ENCODE measurements at regions of chr13 and their contacts with region 1.

Region 1: DNA sequence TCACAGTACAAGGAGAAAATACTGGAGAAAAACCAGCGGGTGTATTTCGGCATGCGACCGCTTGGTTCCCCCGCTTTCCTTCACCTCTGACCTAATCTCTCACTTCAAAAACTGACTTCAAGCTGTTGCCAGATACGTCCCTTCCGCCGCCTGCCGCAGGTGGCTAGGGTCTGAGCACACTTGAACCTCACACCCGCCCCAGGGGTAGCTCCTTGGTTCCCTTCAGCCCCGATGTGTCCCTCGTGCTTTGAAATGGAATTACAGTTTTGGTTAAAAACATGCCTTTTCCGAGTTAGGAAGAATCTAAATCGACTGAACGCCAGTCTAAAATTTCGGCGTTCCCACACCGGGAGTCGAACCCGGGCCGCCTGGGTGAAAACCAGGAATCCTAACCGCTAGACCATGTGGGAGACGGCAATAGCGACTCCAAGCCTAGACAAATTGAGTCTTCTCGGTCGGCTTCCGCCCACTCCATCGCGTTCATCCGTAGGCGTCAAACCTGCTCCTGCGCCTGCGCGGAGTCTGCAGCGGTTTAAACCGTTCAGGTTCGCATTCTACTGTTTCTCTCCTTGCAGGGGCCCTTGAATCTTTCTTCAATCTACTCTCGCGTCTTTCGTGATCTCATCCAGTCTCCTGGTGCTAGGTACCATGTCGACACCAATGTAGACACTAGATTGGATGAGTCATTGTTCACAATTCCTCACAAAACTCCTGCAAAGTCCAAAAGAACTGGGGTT is 71.5 kb downstream of the NUFIP1 start:
- DNase-seq: peak; percentile 95 to 98 (median 97)
- ATAC-seq: peak; percentile 85
- H3K4me3 ChIP-seq: peak overlapping the region; percentile 89
- H3K4me3 Mint-ChIP-seq: no peak overlapping the region
- H3K27ac ChIP-seq: peak overlapping the region; percentile 75
- H3K27ac Mint-ChIP-seq: no peak overlapping the region
- H3K4me1 ChIP-seq: peaks cover 5 to 9% of the 10 kb centered on the region in 2 donors
- H3K4me1 Mint-ChIP-seq: peaks cover 2 to 19% (median 7%) of the 10 kb centered on the region in 7 donors
- H3K27me3 ChIP-seq: no peaks in the 10 kb centered on the region
- H3K27me3 Mint-ChIP-seq: peaks cover 0 to 4% (median 0%) of the 10 kb centered on the region in 5 donors

Region 2: GRCh38 chr13:43905435-43906031 is 1012.2 kb before region 1 on chr13:
- CTCF ChIA-PET with region 1: no interaction called
- POLR2A ChIA-PET with region 1: no interaction called
- intact Hi-C with region 1: loop called in 1 of 2 experiments (anchors 5 kb)
- DNase-seq: peak in 7 of 9 donors; percentile 21 to 61 (median 48)
- ATAC-seq: peak; percentile 85
- H3K4me3 ChIP-seq: no peak overlapping the region
- H3K4me3 Mint-ChIP-seq: no peak overlapping the region
- H3K27ac ChIP-seq: no peak overlapping the region
- H3K27ac Mint-ChIP-seq: no peak overlapping the region
- H3K4me1 ChIP-seq: no peaks in the 10 kb centered on the region
- H3K4me1 Mint-ChIP-seq: peaks cover 0 to 6% (median 3%) of the 10 kb centered on the region in 7 donors
- H3K27me3 ChIP-seq: no peaks in the 10 kb centered on the region
- H3K27me3 Mint-ChIP-seq: peaks cover 13 to 35% (median 18%) of the 10 kb centered on the region in 5 donors

Region 3: DNA sequence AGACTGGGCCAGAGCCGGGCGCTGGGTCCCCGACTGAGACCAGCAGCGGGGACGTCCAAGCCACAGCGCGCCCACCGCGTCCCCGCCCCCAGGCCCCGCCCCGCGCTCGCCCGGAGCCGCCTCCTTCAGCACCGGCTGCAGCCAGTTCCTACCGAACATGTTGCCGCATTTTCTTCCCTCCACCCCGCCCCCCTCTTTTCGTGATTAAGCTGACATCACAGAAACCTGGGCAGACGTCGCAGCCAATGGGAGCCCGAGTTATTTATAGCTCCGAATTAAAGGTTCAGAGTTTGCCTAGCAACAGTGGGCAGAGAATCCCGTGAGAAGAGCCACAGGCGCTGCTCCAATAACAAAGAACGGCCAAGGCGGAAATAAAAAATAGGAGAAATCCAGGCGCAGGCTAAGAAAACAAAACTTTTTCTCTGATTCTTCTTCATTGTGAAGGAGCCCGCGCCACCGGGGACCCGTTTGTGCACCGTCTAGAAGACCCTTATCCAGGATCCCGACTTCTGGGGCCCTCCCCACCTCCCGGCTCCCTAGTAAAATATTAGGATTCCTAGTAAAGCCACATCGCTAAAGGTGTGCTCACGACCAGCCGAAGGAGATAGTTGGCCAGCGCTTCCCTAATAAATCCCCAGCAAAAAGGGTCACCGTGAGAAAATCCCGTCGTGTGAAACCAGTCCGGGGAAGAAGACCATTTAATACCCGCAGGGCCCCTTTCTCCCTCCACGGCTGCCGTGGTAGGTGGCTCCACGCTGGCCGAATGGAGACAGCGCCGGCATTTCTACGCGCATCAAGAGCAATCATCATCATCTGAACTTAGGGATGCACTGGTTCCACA is 482.4 kb before region 1 on chr13:
- CTCF ChIA-PET with region 1: interaction called, 3 read pairs
- POLR2A ChIA-PET with region 1: interaction called, 3 read pairs
- intact Hi-C with region 1: loop called in 1 of 2 experiments (anchors 1 kb)
- DNase-seq: peak; percentile 58 to 94 (median 78)
- ATAC-seq: peak; percentile 91
- H3K4me3 ChIP-seq: peak overlapping the region; percentile 65
- H3K4me3 Mint-ChIP-seq: peak overlapping the region; percentile 85 to 94 (median 90)
- H3K27ac ChIP-seq: peak overlapping the region; percentile 75
- H3K27ac Mint-ChIP-seq: peak overlapping the region; percentile 21 to 93 (median 83)
- H3K4me1 ChIP-seq: peaks cover 13 to 14% of the 10 kb centered on the region in 2 donors
- H3K4me1 Mint-ChIP-seq: peaks cover 14 to 34% (median 27%) of the 10 kb centered on the region in 7 donors
- H3K27me3 ChIP-seq: peaks cover 0 to 3% of the 10 kb centered on the region in 2 donors
- H3K27me3 Mint-ChIP-seq: peaks cover 6 to 73% (median 9%) of the 10 kb centered on the region in 5 donors

Region 4: DNA sequence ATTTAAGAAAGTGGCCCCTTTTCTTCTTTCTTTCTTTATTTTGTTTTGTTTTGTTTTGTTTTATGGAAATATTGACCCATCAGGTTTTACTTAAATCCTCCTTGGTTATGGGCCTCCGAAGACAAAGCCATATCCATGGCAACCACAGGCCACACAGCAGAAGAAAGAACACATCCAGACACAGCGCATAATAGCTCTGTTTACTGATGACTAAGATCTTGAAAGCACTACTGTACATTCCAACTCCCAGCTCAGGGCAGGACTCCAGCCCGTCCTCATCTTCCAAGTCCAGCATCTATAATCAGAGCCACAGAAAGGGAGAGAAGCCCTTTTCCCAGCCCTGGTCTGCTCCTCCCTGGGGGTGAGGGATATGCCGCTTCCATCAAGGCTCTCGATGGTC is 12.8 kb before region 1 on chr13:
- CTCF ChIA-PET with region 1: no interaction called
- POLR2A ChIA-PET with region 1: no interaction called
- intact Hi-C with region 1: no loop called
- DNase-seq: no peak
- ATAC-seq: no peak
- H3K4me3 ChIP-seq: no peak overlapping the region
- H3K4me3 Mint-ChIP-seq: no peak overlapping the region
- H3K27ac ChIP-seq: no peak overlapping the region
- H3K27ac Mint-ChIP-seq: no peak overlapping the region
- H3K4me1 ChIP-seq: no peaks in the 10 kb centered on the region
- H3K4me1 Mint-ChIP-seq: no peaks in the 10 kb centered on the region
- H3K27me3 ChIP-seq: no peaks in the 10 kb centered on the region
- H3K27me3 Mint-ChIP-seq: peaks cover 0 to 12% (median 5%) of the 10 kb centered on the region in 5 donors

Region 5: GRCh38 chr13:44969551-44970484 is 52.1 kb after region 1 on chr13:
- CTCF ChIA-PET with region 1: interaction called, 3 read pairs
- POLR2A ChIA-PET with region 1: no interaction called
- intact Hi-C with region 1: loop called (anchors 1 kb)
- DNase-seq: peak in 5 of 9 donors; percentile 13 to 27 (median 18)
- ATAC-seq: peak; percentile 51
- H3K4me3 ChIP-seq: no peak overlapping the region
- H3K4me3 Mint-ChIP-seq: no peak overlapping the region
- H3K27ac ChIP-seq: no peak overlapping the region
- H3K27ac Mint-ChIP-seq: no peak overlapping the region
- H3K4me1 ChIP-seq: no peaks in the 10 kb centered on the region
- H3K4me1 Mint-ChIP-seq: no peaks in the 10 kb centered on the region
- H3K27me3 ChIP-seq: no peaks in the 10 kb centered on the region
- H3K27me3 Mint-ChIP-seq: no peaks in the 10 kb centered on the region

Region 6: GRCh38 chr13:45340926-45341750 is 423.4 kb after region 1 on chr13 and contains the start of gene TPT1:
- CTCF ChIA-PET with region 1: no interaction called
- POLR2A ChIA-PET with region 1: no interaction called
- intact Hi-C with region 1: loop called in 1 of 2 experiments (anchors 1 kb)
- DNase-seq: peak; percentile 99 to 100 (median 99)
- ATAC-seq: peak; percentile 91
- H3K4me3 ChIP-seq: peak within 1 kb of the TSS; percentile 94
- H3K4me3 Mint-ChIP-seq: peak within 1 kb of the TSS; percentile 95 to 100 (median 98)
- H3K27ac ChIP-seq: peak within 1 kb of the TSS; percentile 99
- H3K27ac Mint-ChIP-seq: peak within 1 kb of the TSS; percentile 92 to 100 (median 99)
- H3K4me1 ChIP-seq: peaks cover 35 to 43% of the 10 kb centered on the region in 2 donors
- H3K4me1 Mint-ChIP-seq: peaks cover 35 to 70% (median 57%) of the 10 kb centered on the region in 7 donors
- H3K27me3 ChIP-seq: no peaks in the 10 kb centered on the region
- H3K27me3 Mint-ChIP-seq: no peaks in the 10 kb centered on the region
- total RNA-seq, gene TPT1: 4,230 to 13,134 (median 7,796) TPM

Region 7: DNA sequence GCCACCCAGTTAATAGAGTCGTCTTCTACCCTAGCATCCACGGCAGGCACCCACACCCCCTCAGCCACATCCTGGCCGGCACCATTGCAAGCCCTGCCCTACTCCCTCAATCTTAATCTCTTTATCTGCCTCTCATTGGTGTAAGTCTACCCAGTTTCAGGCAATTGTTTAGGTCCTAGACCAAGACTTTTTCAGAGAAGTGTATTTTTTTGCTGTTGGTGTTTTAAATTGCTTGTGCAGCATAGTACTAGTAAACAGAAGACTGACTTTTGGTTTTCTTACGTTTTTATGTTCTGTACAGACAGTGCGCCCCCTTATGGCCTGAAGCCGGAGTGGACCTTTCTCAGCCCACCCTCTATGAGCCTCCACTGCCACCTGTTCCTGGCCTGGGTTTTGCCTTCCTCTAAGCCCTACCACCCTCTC is 1266.5 kb after region 1 on chr13:
- CTCF ChIA-PET with region 1: no interaction called
- POLR2A ChIA-PET with region 1: no interaction called
- intact Hi-C with region 1: loop called in 1 of 2 experiments (anchors 5 kb)
- DNase-seq: peak in 8 of 9 donors; percentile 60 to 74 (median 69)
- ATAC-seq: peak; percentile 75
- H3K4me3 ChIP-seq: peak overlapping the region; percentile 83
- H3K4me3 Mint-ChIP-seq: peak overlapping the region; percentile 67 to 99 (median 85)
- H3K27ac ChIP-seq: peak overlapping the region; percentile 82
- H3K27ac Mint-ChIP-seq: peak overlapping the region; percentile 86 to 99 (median 96)
- H3K4me1 ChIP-seq: peaks cover 27 to 35% of the 10 kb centered on the region in 2 donors
- H3K4me1 Mint-ChIP-seq: peaks cover 35 to 48% (median 38%) of the 10 kb centered on the region in 7 donors
- H3K27me3 ChIP-seq: no peaks in the 10 kb centered on the region
- H3K27me3 Mint-ChIP-seq: peaks cover 0 to 3% (median 0%) of the 10 kb centered on the region in 5 donors

Measured in naive thymus-derived CD4-positive, alpha-beta T cell (primary cell).